GM18951 (cell line): ENCODE measurements at regions of chr15 and their contacts with region 1.

Region 1: GRCh38 chr15:68559345-68560310 is 19.2 kb upstream of the CORO2B start:
- POLR2A ChIP-seq: no peak

Region 2: GRCh38 chr15:68666120-68666811 is 106.6 kb after region 1 on chr15:
- in situ Hi-C with region 1: loop called (anchors 10 kb)
- POLR2A ChIP-seq: no peak

Region 3: GRCh38 chr15:68700455-68701123 is 141.0 kb after region 1 on chr15:
- in situ Hi-C with region 1: no loop called
- POLR2A ChIP-seq: no peak

Region 4: DNA sequence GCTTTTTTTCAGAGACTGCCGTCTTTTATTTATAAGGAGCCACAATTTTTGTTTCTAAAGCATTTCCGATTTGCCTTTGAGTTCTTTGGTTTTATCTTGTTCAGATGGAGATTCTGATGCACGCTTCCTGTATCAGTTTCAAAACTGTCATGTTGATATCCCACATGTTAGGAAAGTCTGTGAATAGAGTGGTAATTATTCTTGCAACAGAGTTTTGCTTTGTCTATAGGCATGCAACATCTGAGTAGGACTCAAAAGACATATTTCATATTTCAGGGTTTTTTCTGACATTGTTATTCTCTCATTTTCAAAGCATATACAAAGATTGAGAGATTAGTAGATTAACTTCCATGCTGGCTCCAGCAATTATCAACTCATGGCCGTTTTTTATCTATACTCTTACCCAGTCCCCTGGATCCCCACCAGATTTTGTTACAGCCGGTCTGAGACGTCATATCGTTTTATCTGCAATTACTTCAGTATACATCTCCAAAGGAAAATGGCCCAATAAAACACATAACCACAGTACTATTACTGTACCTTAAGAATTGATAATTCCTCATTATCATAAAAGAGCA is 761.4 kb after region 1 on chr15:
- in situ Hi-C with region 1: no loop called
- POLR2A ChIP-seq: no peak